ENCODE measurements at regions of chr14 and their contacts with region 1.

Region 1: DNA sequence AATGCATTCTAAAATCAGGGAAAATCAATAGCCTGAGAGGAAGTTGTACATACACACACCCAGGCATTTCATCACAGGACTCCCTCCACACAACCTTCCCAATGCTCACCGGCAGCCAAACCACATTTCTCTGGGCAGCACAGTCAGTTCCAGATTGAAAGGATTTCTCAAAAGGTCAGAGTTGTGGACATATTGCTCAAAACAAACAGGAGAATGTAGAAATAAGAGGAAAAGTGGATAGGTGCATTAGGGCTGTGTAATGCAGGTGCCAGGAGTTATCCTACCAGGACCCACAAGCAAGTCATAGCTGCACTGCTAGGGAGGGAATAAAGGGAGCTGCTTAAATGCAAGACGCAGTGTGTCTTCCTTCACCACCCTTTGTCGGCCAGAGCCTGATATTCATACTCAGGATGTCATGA is 62.9 kb downstream of the GCH1 start:
- DNase-seq: peak; percentile 87

Region 2: DNA sequence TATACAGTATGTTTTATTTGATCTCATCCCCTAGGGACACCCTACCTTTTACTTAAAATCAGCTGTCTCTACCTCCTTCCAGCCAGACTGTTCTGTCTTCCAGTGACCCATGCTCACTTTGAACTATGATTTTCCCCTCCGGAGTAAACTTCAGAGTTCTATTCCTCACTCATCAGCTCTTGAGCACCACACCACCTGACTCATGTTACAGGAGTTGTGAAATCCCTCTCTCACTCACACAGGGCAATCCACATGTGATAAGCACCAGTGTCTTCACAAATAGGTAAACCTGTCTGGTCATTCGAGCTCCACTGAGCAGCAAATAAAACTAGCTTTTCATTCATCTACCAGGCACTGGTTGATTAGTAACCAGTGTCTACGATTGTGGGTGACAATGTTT is 705.8 kb before region 1 on chr14:
- intact Hi-C with region 1: loop called in 1 of 2 experiments (anchors 5 kb)
- DNase-seq: no peak

Region 3: DNA sequence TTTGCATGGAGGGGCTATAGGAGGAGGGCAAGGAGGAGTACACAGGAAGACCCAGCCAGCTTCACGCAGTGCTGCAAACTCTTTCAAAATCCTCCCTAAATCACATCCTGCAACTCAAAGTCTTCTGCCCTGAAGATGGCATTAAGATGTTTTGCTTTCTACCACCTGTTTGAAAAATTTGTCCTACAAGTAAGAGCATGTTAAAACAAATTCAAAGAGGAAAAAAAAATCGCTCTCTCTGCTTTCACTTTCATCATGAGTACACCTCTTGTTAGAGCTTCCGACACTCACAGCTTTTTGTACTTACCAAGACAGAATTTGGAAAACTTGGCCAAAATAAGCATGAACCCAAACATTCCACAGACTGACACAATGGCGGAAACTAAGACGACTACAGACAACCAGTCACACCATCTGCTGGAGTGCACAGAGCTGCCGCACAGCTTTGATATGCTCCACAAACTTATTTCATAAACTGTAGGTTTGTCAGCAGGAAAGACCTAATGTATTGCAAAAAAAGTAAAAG is 41.6 kb after region 1 on chr14:
- intact Hi-C with region 1: loop called in 1 of 2 experiments (anchors 10 kb)
- DNase-seq: no peak

Region 4: DNA sequence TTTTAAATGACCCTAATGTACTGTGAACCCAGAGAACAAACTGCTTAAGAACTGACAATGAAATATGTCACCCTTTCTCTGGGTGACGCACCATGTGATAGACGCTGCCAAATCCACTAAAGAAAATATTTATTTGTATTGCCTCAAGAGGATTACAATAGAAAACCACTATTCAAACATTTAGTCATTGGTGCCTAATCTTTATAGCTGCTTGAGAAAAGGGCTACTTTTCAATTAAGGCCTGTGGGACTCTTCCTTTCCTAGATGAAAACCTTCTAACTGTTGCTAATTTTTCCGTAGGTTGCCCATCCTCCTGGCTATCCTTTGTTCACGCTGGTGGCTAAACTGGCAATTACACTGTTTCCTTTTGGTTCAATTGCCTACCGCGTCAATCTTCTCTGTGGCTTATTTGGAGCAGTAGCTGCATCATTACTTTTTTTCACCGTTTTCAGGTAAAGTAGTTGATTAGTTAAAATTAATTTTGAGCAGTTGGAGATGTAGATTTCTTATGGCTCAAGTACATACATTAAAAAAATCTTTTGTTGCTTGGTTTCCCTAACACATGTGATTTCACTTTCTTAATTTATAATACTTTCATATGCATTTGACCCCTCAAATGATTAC is 1745.9 kb after region 1 on chr14:
- intact Hi-C with region 1: no loop called
- DNase-seq: no peak